Activated CD4-positive, alpha-beta T cell treated with anti-CD3 and anti-CD28 coated beads, Interleukin-2, amount 10 ng/mL, durations not matched to agents 24 days and 14 days (primary cell): ENCODE measurements at regions of chr22 and their contacts with region 1.

Region 1: DNA sequence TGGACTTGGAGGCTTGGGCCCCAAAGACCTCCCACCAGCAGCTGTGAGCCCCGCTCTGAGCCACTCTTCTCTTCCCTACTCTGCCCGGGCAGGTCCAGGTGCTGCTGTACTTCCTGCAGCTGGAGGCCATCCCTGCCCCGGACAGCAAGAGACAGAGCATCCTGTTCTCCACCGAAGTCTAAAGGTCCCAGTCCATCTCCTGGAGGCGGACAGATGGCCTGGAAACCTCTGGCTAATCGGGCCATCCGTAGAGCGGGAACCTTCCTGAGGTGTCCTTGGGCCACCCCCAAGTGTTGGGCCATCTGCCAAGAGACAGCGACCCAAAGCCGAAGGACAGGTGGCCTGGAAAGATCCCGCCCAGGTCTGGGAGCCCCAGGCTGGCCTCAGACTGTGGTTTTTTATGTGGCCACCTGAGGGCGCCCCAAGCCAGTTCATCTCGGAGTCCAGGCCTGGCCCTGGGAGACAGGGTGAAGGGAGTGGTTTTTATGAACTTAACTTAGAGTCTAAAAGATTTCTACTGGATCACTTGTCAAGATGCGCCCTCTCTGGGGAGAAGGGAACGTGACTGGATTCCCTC is 135.1 kb downstream of the BCR start:
- DNase-seq: peak; percentile 86
- H3K4me3 Mint-ChIP-seq: no peak overlapping the region
- H3K27ac Mint-ChIP-seq: no peak overlapping the region
- H3K4me1 Mint-ChIP-seq: peaks cover 2% of the 10 kb centered on the region
- H3K27me3 Mint-ChIP-seq: no peaks in the 10 kb centered on the region

Region 2: DNA sequence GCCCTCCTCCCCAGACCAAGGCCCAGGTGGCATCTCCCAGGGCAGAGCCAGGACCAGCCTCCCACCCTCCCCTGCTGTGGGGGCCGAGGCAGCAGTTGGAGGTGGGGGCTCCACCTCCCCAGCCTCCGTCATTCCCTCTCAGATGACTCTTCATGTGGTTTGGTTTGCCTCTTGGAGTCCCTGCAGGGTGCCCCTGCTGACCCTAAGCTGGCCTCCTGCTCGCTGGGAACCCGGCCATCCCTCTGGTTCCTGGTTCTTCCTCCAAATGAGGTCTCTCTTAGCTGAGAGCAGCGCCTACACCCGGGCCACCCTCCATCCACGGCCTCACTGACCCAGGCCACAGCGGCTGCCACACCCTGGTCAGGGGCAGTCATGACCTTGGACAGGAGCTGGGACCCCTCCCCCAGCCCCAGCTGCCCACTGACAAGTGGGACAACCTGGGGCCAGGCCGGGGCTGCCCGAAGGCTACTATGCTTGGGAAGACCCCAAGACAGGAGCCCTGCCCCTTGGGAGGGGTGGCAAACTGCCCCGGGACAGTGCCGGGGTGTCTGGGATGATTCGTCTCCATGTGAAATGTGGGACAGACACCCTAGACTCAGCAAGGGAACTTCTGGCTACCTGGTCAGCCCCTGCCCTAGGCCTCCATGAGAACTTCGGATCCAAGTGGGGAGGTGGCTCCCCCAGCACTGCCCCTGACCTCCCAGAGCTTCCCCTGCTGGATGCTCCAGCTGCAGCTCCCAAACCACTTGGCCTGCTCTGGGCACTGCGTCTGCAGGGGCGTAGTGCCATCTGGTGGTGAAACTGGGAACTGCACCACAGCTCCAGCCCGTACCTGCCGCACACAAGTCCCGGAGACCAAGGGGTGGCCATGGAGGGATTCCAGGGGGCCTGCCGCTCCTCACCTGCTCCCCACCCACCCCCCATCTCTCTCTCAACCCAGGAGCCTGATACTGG is 70.1 kb after region 1 on chr22:
- intact Hi-C with region 1: loop called (anchors 2 kb)
- DNase-seq: peak; percentile 94
- H3K4me3 Mint-ChIP-seq: no peak overlapping the region
- H3K27ac Mint-ChIP-seq: no peak overlapping the region
- H3K4me1 Mint-ChIP-seq: no peaks in the 10 kb centered on the region
- H3K27me3 Mint-ChIP-seq: no peaks in the 10 kb centered on the region